Activated CD4-positive, alpha-beta memory T cell treated with anti-CD3 and anti-CD28 coated beads for 36 hours (primary cell): ENCODE measurements at regions of chr2 and their contacts with region 1.

Region 1: DNA sequence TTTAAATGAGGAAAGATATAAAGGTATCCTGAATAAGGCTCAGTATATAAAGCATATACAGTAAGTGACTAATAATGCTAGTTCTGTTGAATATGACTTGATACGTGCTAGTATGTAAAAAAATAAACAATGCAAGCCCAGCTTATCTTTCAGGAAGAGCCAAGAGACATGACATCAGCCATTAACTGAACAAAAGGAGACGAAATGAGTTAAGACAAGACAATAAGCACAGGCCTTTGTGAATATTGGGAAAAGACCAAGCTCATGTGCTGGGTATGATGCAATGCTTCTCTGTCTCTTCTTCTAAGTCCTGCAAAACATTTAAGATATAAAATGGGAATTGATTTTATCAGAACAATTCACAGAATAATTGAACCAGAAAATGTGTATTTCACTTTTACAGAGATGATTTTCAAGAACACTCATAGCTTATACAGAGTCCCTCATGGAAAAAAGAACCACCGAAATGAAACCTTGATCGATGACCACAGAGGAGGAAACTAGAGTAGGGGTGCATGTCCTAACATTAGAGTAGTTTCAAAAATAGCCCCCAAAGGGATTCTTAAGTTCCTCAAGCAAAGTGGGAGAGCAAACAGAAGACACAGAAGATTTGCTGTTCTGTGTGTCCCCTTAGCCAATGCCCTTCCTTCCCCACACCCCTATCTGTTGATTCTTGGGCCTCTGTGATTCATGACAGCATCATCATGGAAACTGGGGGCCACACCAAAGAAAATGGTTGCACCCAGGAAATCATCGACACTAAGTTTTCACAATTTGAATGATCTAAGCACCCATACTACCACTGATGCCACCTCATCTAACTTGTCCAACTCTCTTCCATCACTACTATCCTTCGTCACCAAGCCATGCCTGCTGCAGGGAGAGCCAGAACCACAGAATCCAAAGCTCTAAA is 68.0 kb upstream of the CRIM1 start:
- DNase-seq: peak; percentile 47
- H3K4me3 Mint-ChIP-seq: no peak overlapping the region
- H3K27ac Mint-ChIP-seq: no peak overlapping the region
- H3K4me1 Mint-ChIP-seq: peaks cover 8% of the 10 kb centered on the region
- H3K27me3 Mint-ChIP-seq: peaks cover 1% of the 10 kb centered on the region

Region 2: GRCh38 chr2:35915261-35915660 is 372.4 kb before region 1 on chr2:
- CTCF ChIA-PET with region 1: no interaction called
- POLR2A ChIA-PET with region 1: no interaction called
- intact Hi-C with region 1: no loop called
- DNase-seq: no peak
- H3K4me3 Mint-ChIP-seq: no peak overlapping the region
- H3K27ac Mint-ChIP-seq: no peak overlapping the region
- H3K4me1 Mint-ChIP-seq: no peaks in the 10 kb centered on the region
- H3K27me3 Mint-ChIP-seq: no peaks in the 10 kb centered on the region

Region 3: GRCh38 chr2:36277146-36277808 is 10.3 kb before region 1 on chr2:
- CTCF ChIA-PET with region 1: no interaction called
- POLR2A ChIA-PET with region 1: interaction called, 3 read pairs
- intact Hi-C with region 1: loop called (anchors 1 kb)
- DNase-seq: peak; percentile 57
- H3K4me3 Mint-ChIP-seq: no peak overlapping the region
- H3K27ac Mint-ChIP-seq: no peak overlapping the region
- H3K4me1 Mint-ChIP-seq: peaks cover 3% of the 10 kb centered on the region
- H3K27me3 Mint-ChIP-seq: no peaks in the 10 kb centered on the region

Region 4: GRCh38 chr2:36307441-36307840 is 19.8 kb after region 1 on chr2:
- CTCF ChIA-PET with region 1: no interaction called
- POLR2A ChIA-PET with region 1: no interaction called
- intact Hi-C with region 1: loop called (anchors 1 kb)
- DNase-seq: no peak
- H3K4me3 Mint-ChIP-seq: no peak overlapping the region
- H3K27ac Mint-ChIP-seq: no peak overlapping the region
- H3K4me1 Mint-ChIP-seq: peaks cover 25% of the 10 kb centered on the region
- H3K27me3 Mint-ChIP-seq: peaks cover 2% of the 10 kb centered on the region